ENCODE measurements at regions of chr1 and their contacts with region 1.

Region 1: GRCh38 chr1:9317591-9318417 is 25.1 kb downstream of the SPSB1 start:
- DNase-seq: peak; percentile 44
- H3K4me3 Mint-ChIP-seq: no peak overlapping the region
- H3K27ac Mint-ChIP-seq: no peak overlapping the region
- H3K4me1 Mint-ChIP-seq: peaks cover 38% of the 10 kb centered on the region
- H3K27me3 Mint-ChIP-seq: no peaks in the 10 kb centered on the region

Region 2: GRCh38 chr1:9234223-9235095 is 83.3 kb before region 1 on chr1 and contains the start of gene H6PD:
- CTCF ChIA-PET with region 1: no interaction called
- POLR2A ChIA-PET with region 1: no interaction called
- intact Hi-C with region 1: no loop called
- DNase-seq: peak; percentile 77
- H3K4me3 Mint-ChIP-seq: peak within 1 kb of the TSS; percentile 86
- H3K27ac Mint-ChIP-seq: peak within 1 kb of the TSS; percentile 88
- H3K4me1 Mint-ChIP-seq: peaks cover 37% of the 10 kb centered on the region
- H3K27me3 Mint-ChIP-seq: no peaks in the 10 kb centered on the region
- total RNA-seq, gene H6PD: 9.3 to 10.4 TPM

Region 3: DNA sequence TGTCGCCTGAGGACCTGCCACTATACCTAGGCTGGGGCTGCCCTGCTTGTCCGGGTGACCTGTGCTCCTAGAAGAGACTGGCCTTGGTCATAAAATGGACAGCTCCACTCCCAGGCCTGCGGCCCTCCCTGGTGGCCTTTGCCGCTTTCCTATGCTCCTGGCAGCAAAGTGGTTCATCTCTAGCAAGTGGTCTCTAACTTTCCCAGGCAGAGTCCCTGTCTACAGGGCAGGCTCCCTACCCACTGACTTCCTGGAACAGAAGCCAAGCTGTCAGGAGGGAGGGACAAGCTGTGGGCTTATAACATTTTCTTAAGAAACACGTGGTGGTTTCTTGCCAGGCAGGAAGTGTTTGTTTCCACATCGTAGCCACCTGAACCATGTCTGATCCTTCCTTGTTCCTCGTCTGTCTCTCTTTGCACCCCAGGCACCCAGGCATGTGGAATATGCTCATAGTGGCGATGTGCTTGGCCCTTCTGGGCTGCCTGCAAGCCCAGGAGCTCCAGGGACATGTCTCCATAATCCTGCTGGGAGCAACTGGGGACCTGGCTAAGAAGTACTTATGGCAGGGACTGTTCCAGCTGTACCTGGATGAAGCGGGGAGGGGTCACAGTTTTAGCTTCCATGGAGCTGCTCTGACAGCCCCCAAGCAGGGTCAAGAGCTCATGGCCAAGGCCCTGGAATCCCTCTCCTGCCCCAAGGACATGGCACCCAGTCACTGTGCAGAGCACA is 73.1 kb before region 1 on chr1:
- CTCF ChIA-PET with region 1: no interaction called
- POLR2A ChIA-PET with region 1: no interaction called
- intact Hi-C with region 1: no loop called
- DNase-seq: no peak
- H3K4me3 Mint-ChIP-seq: no peak overlapping the region
- H3K27ac Mint-ChIP-seq: no peak overlapping the region
- H3K4me1 Mint-ChIP-seq: peaks cover 20% of the 10 kb centered on the region
- H3K27me3 Mint-ChIP-seq: no peaks in the 10 kb centered on the region

Region 4: GRCh38 chr1:9275567-9276034 is 42.2 kb before region 1 on chr1:
- CTCF ChIA-PET with region 1: interaction called, 3 read pairs
- POLR2A ChIA-PET with region 1: no interaction called
- intact Hi-C with region 1: loop called (anchors 5 kb)
- DNase-seq: peak; percentile 94
- H3K4me3 Mint-ChIP-seq: no peak overlapping the region
- H3K27ac Mint-ChIP-seq: no peak overlapping the region
- H3K4me1 Mint-ChIP-seq: peaks cover 35% of the 10 kb centered on the region
- H3K27me3 Mint-ChIP-seq: peaks cover 6% of the 10 kb centered on the region

Region 5: DNA sequence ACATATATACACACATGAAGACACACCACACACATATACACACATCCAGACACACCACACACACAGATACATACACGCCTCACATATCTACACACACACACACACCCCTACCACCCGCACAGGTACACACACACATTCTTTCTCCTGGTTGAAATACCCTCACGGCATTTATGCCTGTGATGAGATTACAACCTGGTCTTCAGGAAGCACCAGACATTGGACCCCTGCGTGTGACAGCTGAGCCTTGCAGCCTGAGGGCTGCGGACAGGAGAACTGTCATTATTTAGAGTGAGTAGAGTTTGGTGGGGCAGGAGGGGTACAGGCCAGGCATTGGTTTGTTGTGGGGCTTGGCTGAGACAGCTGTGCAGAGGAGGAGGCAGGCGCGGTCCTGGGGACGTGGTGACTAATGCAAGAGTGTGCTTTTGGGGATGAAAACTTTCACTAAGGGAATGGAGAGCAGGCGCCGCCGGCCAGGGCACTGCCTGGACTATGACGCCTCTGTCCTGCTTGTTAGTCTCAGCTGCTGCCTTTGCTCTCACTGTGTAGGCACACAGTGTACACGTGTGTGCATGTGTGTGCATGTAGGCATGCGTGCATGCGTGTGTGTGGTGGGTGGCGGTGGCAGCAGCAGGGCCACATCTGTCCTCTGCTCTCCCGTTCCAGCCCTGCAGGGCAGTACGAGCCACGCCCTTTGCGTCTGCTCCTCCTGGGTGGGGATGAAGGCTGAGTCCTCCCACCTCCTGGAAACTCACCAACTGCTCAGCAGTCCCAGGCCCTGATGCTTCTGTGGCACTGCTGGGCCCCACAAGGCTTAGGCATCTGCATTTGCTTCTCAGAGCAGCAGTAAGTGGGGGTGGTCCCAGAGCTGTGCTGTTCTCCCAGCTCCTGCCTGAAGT is 32.5 kb after region 1 on chr1:
- CTCF ChIA-PET with region 1: no interaction called
- POLR2A ChIA-PET with region 1: no interaction called
- intact Hi-C with region 1: no loop called
- DNase-seq: no peak
- H3K4me3 Mint-ChIP-seq: no peak overlapping the region
- H3K27ac Mint-ChIP-seq: no peak overlapping the region
- H3K4me1 Mint-ChIP-seq: peaks cover 10% of the 10 kb centered on the region
- H3K27me3 Mint-ChIP-seq: no peaks in the 10 kb centered on the region

Region 6: DNA sequence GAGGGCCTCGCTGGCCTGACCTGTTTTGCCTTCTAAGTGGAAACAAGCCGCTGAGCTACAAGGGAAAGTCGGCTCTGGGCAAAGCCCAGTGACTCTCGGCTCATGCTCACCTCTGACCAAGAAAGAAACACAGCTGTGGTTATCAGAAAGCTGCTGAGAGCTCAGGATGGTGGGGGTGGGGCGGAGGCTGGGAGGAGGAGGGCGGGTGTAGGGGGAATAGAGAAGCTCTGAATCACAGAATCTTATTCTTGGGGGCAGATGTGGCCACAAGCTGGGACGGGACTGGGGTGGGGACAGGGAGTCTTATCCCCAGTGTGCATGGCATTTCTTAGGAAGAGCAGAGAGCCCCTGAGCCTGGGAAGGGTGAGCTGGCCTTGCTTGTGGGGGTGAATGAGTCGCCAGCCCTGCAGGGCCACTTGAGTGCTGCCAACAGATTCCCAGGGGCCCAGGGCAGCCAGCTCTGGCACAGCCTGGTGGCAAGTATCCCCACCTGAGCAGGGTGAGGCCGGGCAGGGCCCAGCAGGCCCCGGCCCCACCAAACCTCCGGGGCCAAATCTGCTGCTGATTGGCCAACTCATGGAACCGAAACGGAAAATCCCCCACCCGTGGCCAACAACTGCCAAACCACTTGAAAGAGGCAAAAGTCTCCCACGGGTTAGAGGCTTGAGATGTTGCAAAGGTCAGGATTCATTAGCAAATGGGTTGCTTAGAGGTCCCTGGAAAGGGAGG is 95.5 kb after region 1 on chr1:
- CTCF ChIA-PET with region 1: no interaction called
- POLR2A ChIA-PET with region 1: no interaction called
- intact Hi-C with region 1: loop called (anchors 1 kb)
- DNase-seq: peak; percentile 90
- H3K4me3 Mint-ChIP-seq: no peak overlapping the region
- H3K27ac Mint-ChIP-seq: peak overlapping the region; percentile 56
- H3K4me1 Mint-ChIP-seq: peaks cover 51% of the 10 kb centered on the region
- H3K27me3 Mint-ChIP-seq: peaks cover 5% of the 10 kb centered on the region

Region 7: GRCh38 chr1:9539165-9539828 is 221.5 kb after region 1 on chr1 and contains the start of gene SLC25A33:
- CTCF ChIA-PET with region 1: no interaction called
- POLR2A ChIA-PET with region 1: no interaction called
- intact Hi-C with region 1: loop called (anchors 5 kb)
- DNase-seq: peak; percentile 99
- H3K4me3 Mint-ChIP-seq: peak within 1 kb of the TSS; percentile 91
- H3K27ac Mint-ChIP-seq: peak within 1 kb of the TSS; percentile 77
- H3K4me1 Mint-ChIP-seq: peaks cover 33% of the 10 kb centered on the region
- H3K27me3 Mint-ChIP-seq: no peaks in the 10 kb centered on the region
- total RNA-seq, gene SLC25A33: 5.4 to 6.1 TPM

Region 8: DNA sequence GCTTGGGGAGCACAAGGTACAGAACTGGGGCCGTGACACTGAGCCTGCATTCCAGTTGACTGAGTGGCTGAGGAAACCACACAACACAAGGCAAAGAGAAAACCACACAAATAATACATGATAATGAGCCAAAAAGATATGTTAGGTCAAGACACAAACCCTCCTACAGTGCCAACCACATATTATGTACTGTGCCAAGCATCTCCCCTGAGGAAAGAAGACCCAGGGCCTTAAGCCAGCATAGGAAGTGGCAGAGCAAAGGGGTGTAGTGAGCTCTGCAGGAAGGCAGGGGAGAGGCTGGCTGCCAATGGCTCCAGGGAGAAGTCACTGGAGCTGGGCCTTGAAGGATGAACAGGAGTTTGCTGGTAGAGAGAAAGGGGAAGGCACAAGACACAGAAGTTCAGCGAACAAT is 564.0 kb after region 1 on chr1:
- CTCF ChIA-PET with region 1: no interaction called
- POLR2A ChIA-PET with region 1: no interaction called
- intact Hi-C with region 1: no loop called
- DNase-seq: no peak
- H3K4me3 Mint-ChIP-seq: no peak overlapping the region
- H3K27ac Mint-ChIP-seq: no peak overlapping the region
- H3K4me1 Mint-ChIP-seq: peaks cover 10% of the 10 kb centered on the region
- H3K27me3 Mint-ChIP-seq: no peaks in the 10 kb centered on the region